Dendritic cell treated with granulocyte-macrophage colony-stimulating factor and Interleukin-4, amounts not matched to agents 40 ng/mL and 50 ng/mL, for 4 days (primary cell): ENCODE measurements at regions of chr1 and their contacts with region 1.

Region 1: GRCh38 chr1:212477014-212477679 is 44.4 kb downstream of the NENF start:
- H3K4me3 Mint-ChIP-seq: peak overlapping the region; percentile 27
- H3K27ac Mint-ChIP-seq: peak overlapping the region; percentile 53
- H3K4me1 Mint-ChIP-seq: peaks cover 47% of the 10 kb centered on the region
- H3K27me3 Mint-ChIP-seq: peaks cover 25% of the 10 kb centered on the region

Region 2: DNA sequence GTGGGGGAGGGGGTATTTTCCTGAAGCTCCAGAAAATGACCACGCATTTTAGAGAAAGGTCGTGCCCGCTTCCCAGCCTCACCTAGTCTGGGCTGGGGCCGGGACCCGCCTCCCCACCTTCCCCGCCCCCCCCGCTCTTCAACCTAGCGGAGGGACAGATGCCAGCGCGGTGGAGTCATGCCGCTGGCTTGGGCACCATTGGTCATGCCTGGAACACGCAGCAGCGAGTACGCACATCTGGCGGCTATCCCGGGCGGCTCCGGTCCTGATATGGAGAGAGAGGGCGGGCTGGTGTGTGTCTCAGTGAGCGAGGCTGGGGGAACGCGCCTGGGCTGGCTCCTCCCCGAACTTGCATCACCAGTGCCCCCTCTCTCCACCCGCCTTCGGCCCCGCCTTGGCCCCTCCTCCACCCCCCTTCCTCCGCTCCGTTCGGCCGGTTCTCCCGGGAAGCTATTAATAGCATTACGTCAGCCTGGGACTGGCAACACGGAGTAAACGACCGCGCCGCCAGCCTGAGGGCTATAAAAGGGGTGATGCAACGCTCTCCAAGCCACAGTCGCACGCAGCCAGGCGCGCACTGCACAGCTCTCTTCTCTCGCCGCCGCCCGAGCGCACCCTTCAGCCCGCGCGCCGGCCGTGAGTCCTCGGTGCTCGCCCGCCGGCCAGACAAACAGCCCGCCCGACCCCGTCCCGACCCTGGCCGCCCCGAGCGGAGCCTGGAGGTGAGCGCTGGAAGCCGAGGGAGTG is 131.2 kb after region 1 on chr1 and contains the start of gene ATF3:
- intact Hi-C with region 1: loop called (anchors 1 kb)
- H3K4me3 Mint-ChIP-seq: peak within 1 kb of the TSS; percentile 91
- H3K27ac Mint-ChIP-seq: peak within 1 kb of the TSS; percentile 96
- H3K4me1 Mint-ChIP-seq: peaks cover 64% of the 10 kb centered on the region
- H3K27me3 Mint-ChIP-seq: peaks cover 60% of the 10 kb centered on the region